Activated CD8-positive, alpha-beta T cell treated with anti-CD3 and anti-CD28 coated beads, Interleukin-2, amount 10 ng/mL, durations not matched to agents 7 days and 5 days (primary cell): ENCODE measurements at regions of chr6 and their contacts with region 1.

Region 1: GRCh38 chr6:45663551-45664221 is 286.0 kb upstream of the SUPT3H start:
- DNase-seq: peak; percentile 55
- ATAC-seq: peak; percentile 77
- H3K4me3 Mint-ChIP-seq: no peak overlapping the region
- H3K27ac Mint-ChIP-seq: no peak overlapping the region
- H3K4me1 Mint-ChIP-seq: peaks cover 46% of the 10 kb centered on the region
- H3K27me3 Mint-ChIP-seq: peaks cover 11% of the 10 kb centered on the region

Region 2: DNA sequence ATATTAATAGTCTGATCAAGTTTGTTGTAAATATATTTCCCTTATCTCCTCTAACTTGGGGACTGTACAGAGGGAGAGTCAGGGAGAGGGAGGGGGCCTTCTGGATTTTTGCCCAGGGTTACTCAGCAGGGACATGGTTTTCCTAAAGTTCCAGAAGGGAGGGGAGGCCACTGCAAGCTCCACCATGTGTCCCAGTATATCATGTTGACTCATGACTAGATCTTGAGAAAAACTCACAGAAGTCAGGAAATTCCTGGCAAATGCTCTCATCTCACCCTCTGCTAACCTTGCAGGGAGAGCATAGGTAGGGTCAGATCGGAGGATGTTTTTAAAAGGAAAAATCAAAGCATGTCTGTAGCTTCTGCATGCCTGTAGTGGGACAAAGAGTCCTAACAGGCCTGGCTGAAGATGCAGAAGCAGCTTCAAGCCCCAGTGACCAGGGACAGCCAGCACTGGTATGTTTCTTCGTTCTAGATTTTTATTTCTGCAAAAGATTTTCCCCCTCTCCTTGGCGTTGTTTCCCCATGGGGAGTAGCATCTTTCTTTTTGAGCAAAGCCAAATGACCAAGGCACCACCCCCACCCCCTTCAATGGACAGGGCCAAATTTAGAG is 13.1 kb before region 1 on chr6:
- CTCF ChIA-PET with region 1: no interaction called
- POLR2A ChIA-PET with region 1: no interaction called
- DNase-seq: no peak
- ATAC-seq: no peak
- H3K4me3 Mint-ChIP-seq: no peak overlapping the region
- H3K27ac Mint-ChIP-seq: no peak overlapping the region
- H3K4me1 Mint-ChIP-seq: peaks cover 6% of the 10 kb centered on the region
- H3K27me3 Mint-ChIP-seq: no peaks in the 10 kb centered on the region

Region 3: DNA sequence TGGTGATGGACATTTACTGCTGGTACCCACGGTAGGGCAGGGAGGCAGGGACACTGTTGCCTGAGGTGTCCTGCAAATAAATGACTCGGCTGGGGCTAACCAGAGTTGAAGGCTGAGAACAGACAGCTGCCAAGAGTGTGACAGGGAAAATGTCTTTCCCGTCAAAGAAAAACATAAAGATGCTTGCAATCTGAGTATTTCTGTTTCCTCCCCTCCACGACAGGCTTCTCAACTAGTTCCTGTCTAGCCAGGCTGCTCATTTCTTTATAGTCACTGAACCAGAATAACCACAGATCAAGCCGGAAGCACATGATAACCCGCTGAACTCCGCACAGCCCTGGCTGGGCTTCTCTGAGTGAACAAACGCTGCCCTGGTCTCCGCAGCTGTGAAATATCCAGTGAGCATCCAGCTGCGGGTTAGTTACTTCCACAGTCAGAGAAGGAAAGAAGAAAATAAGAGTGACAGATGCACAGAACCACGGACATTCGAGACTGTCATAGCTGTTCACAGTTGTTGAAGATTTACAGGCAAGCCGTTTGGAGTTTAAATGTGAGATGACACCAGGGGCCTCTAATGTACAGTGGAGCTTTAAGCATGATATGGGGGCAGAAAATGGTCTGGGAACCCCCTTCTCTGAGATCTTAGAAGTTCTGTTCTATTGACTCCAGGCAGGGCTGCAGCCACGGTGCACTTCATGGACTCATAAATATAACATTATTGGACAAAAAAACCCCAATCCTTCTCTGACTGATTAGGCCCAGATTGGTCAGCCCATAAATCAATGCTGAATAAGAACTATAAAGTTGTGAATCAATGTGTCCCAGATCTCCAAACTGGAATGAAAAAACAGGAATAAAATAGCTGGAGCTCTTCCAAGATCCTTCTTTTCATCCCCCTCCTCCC is 13.9 kb after region 1 on chr6:
- CTCF ChIA-PET with region 1: interaction called, 18 read pairs
- POLR2A ChIA-PET with region 1: interaction called, 6 read pairs
- DNase-seq: peak; percentile 75
- ATAC-seq: peak; percentile 94
- H3K4me3 Mint-ChIP-seq: peak overlapping the region; percentile 44
- H3K27ac Mint-ChIP-seq: peak overlapping the region; percentile 65
- H3K4me1 Mint-ChIP-seq: peaks cover 28% of the 10 kb centered on the region
- H3K27me3 Mint-ChIP-seq: no peaks in the 10 kb centered on the region